Psoas muscle (tissue), 8 donors: ENCODE measurements at regions of chr18 and their contacts with region 1.

Region 1: DNA sequence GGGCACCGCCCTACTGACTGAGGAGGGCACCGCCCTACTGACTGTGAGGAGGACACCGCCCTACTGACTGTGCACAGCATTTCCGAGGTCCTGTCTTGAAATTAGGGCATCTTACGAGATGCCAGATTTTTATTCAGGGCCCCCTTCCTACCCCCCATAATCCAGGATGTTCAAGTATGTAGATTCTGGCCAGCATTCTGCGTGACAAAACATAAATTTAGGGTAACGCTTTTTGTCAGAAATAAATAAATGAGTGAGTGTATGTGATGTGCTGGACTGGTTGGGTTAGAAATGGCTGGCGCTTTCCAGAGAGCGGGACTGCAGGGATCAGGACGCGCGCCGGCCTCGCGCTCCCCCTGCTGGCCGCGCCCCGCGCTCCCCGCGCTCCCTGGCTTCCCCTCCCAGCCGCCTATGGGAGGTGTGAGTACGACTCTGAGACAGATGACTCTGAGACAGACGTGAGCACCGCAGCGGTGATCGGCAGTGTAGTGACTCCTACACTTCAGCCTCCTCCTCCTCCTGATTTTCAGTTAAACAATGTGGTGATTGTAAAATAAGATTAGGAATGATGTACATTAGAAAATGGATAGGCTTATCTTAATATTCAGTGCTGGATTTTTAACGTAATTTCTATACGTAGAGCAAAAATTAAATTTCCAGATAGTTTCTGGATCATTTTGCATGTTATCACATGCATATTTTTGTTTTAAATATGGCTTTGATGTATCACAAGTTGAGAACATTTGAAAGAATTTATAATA is 149.2 kb upstream of the NFATC1 start:
- DNase-seq: peak; percentile 65 to 77
- ATAC-seq: peak; percentile 89 to 99 (median 98)
- H3K4me3 ChIP-seq: no peak overlapping the region
- H3K27ac ChIP-seq: no peak overlapping the region
- H3K4me1 ChIP-seq: peaks cover 17% of the 10 kb centered on the region
- H3K27me3 ChIP-seq: no peaks in the 10 kb centered on the region
- CTCF ChIP-seq: peak; percentile 94

Region 2: DNA sequence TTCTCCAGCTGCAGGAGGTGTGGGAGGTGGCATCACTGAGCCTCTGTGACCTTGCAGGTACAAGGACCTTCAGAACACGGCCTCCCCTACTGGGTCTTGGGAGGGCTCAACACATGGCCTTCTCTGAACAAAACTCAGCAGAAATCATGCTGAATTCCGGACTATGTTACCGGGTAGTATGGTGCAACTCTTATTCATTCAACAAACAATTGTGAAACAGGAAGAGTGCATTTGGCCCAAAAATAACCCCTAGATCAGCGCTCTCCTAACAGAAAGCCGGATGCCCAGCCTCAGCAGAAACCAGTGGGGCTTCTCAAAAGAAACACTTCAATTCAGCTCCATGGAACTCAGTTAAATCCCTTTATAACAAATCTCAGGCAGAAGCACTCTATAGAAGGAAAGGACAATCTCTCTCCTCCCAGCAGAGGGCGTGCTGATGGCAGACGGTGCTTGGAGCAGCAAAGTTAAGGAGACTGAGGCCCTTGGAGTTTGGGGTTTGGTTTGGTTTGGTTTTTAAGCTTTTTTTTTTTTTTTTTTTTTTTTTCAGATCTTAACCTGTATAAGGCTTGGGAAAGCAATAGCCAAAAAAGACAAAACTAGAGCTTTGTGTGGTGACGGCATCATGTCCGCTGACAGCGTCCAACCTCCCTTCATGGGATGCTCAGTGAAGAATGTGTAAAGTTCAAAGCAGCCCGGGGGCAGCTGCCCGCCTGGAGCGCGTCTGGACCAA is 371.1 kb before region 1 on chr18:
- intact Hi-C with region 1: loop called in 1 of 2 experiments (anchors 2 kb)
- DNase-seq: no peak
- ATAC-seq: no peak
- H3K4me3 ChIP-seq: no peak overlapping the region
- H3K27ac ChIP-seq: no peak overlapping the region
- H3K4me1 ChIP-seq: no peaks in the 10 kb centered on the region
- H3K27me3 ChIP-seq: peaks cover 0 to 3% (median 0%) of the 10 kb centered on the region in 3 donors
- CTCF ChIP-seq: peak; percentile 39

Region 3: GRCh38 chr18:78984941-78985784 is 261.4 kb before region 1 on chr18:
- intact Hi-C with region 1: loop called in 1 of 2 experiments (anchors 10 kb)
- DNase-seq: no peak
- ATAC-seq: peak in 1 of 4 donors; percentile 38
- H3K4me3 ChIP-seq: no peak overlapping the region
- H3K27ac ChIP-seq: no peak overlapping the region
- H3K4me1 ChIP-seq: no peaks in the 10 kb centered on the region
- H3K27me3 ChIP-seq: peaks cover 16 to 94% (median 26%) of the 10 kb centered on the region in 3 donors
- CTCF ChIP-seq: peak; percentile 25

Region 4: DNA sequence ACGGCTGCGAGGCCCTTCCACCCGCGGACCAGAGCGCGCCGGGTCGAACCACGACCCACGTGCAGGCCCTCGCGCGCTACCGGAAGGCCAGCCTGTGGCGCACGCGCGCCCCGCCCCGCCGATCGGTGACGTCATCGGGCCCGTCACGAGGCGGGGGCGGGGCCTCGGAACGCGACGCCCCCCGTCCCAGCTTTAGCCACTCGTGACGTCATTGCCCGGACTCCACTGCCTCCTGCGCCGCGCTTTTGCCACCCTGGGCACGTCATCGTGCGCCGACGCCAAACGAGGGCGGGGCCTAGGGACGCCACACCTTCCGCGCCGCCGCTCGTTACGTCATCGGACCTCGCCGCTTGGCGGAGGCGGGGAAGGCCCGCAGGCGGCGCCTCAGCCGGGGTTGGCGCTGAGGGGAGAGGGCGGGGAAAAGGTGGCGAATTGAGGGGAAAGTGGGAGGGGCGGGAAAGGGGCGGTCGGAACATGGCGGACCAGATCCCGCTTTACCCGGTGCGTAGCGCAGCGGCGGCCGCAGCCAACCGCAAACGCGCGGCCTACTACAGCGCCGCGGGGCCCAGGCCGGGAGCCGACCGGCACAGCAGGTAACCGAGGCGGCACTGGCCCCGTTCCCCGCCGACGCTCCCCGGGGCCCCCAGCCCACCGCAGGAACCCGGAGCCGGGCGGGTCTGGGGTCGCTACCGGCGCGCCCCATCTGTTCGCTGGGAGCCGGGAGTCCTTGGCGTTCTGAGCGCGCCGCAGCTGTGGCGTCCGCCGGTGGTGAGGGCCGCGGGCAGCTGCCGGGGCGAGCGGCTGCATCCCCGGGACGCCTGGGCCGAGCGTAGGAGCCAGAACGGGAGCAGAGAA is 177.4 kb before region 1 on chr18 and contains the start of gene ATP9B:
- intact Hi-C with region 1: loop called in 1 of 2 experiments (anchors 10 kb)
- DNase-seq: peak; percentile 96 to 99
- ATAC-seq: peak; percentile 95 to 97 (median 96)
- H3K4me3 ChIP-seq: peak within 1 kb of the TSS; percentile 98
- H3K27ac ChIP-seq: peak within 1 kb of the TSS; percentile 99
- H3K4me1 ChIP-seq: peaks cover 20% of the 10 kb centered on the region
- H3K27me3 ChIP-seq: no peaks in the 10 kb centered on the region
- CTCF ChIP-seq: no peak
- total RNA-seq, gene ATP9B: 9.8 to 22.1 (median 14.4) TPM

Region 5: GRCh38 chr18:80200171-80200931 is 953.8 kb after region 1 on chr18:
- intact Hi-C with region 1: no loop called
- DNase-seq: no peak
- ATAC-seq: no peak
- H3K4me3 ChIP-seq: no peak overlapping the region
- H3K27ac ChIP-seq: no peak overlapping the region
- H3K4me1 ChIP-seq: no peaks in the 10 kb centered on the region
- H3K27me3 ChIP-seq: no peaks in the 10 kb centered on the region
- CTCF ChIP-seq: peak; percentile 9